ENCODE measurements at regions of chr12 and their contacts with region 1.

Region 1: GRCh38 chr12:75913502-75914351 is 117.8 kb downstream of the PHLDA1 start:
- DNase-seq: no peak
- H3K4me3 ChIP-seq: no peak overlapping the region
- H3K27ac ChIP-seq: no peak overlapping the region
- H3K4me1 ChIP-seq: peaks cover 18% of the 10 kb centered on the region
- H3K27me3 ChIP-seq: no peaks in the 10 kb centered on the region
- CTCF ChIP-seq: no peak
- POLR2A ChIP-seq: no peak

Region 2: DNA sequence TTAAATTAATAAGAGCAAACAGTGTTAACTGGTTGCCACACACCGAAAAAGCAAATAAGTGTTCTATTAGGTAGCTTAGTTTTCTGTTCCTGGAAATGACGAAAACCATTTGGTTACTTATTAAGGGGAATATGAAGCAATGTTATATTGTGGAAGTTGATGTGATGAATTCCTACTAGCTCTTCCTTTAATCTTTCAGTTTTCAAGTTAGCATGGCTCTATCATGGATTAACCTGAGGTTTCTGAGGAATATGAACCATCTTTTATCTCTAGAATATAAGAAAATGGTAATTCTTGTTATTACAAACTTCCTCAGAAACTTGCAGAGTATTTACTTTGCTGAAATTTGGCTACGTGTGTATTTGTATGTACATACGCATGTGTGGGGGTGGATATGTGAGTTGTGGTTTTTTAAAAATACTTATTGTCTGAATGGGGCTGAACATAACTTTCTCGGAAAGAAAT is 949.8 kb before region 1 on chr12:
- intact Hi-C with region 1: loop called (anchors 5 kb)
- DNase-seq: no peak
- H3K4me3 ChIP-seq: no peak overlapping the region
- H3K27ac ChIP-seq: no peak overlapping the region
- H3K4me1 ChIP-seq: no peaks in the 10 kb centered on the region
- H3K27me3 ChIP-seq: no peaks in the 10 kb centered on the region
- CTCF ChIP-seq: no peak
- POLR2A ChIP-seq: no peak

Region 3: DNA sequence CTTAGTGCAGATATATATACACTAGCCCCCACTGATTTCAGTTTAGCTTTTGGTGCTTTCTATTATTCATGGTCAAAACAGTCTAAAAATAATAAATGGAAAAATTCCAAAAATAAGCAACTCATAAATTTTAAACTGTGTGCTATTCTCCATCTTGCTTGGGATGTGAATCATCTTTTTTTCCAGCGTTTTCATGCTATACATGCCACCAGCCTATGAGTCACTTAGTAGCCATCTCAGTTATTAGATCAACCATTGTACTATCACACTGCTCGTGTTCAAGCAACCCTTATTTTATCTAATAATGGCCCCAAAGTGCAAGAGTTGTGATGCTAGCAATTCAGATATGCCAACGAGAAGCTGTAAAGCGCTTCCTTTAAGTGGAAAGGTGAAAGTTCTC is 328.4 kb before region 1 on chr12:
- intact Hi-C with region 1: no loop called
- DNase-seq: no peak
- H3K4me3 ChIP-seq: no peak overlapping the region
- H3K27ac ChIP-seq: no peak overlapping the region
- H3K4me1 ChIP-seq: no peaks in the 10 kb centered on the region
- H3K27me3 ChIP-seq: no peaks in the 10 kb centered on the region
- CTCF ChIP-seq: no peak
- POLR2A ChIP-seq: no peak

Region 4: DNA sequence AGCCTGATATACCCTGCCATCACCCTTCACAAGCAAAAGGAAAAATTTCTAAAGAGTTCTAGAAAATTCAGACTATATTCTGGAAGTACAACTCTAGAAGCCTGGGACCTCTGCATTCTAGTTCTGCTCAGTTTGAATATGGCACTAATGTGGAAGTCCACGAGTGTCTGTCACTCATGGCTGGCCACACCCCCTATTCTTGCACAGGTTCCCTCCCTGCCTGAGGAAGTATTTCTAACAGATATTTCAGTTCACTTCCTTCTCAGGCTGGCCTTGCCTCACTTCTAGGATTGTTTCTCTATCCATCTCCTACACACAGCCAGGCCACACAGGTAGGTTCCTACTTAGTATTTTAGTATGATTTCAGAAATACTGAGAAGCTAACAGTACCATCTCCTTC is 50.4 kb after region 1 on chr12:
- intact Hi-C with region 1: no loop called
- DNase-seq: no peak
- H3K4me3 ChIP-seq: no peak overlapping the region
- H3K27ac ChIP-seq: no peak overlapping the region
- H3K4me1 ChIP-seq: no peaks in the 10 kb centered on the region
- H3K27me3 ChIP-seq: no peaks in the 10 kb centered on the region
- CTCF ChIP-seq: no peak
- POLR2A ChIP-seq: no peak

Region 5: DNA sequence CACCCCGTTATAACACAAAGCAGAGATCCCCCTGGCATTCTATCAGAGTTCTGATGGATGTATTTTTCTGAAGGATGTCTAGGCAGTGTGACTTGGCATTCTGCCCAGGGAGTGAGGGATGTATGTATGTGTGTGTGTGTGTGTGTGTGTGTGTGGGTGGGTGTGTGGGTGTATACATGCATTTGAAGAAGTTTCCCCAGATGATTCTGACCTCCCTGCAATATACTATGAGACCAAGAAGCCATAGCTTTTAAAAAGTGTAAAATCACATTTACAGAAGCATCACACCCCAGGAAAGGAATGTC is 230.5 kb after region 1 on chr12:
- intact Hi-C with region 1: no loop called
- DNase-seq: no peak
- H3K4me3 ChIP-seq: no peak overlapping the region
- H3K27ac ChIP-seq: no peak overlapping the region
- H3K4me1 ChIP-seq: no peaks in the 10 kb centered on the region
- H3K27me3 ChIP-seq: no peaks in the 10 kb centered on the region
- CTCF ChIP-seq: no peak
- POLR2A ChIP-seq: no peak